ENCODE measurements at regions of chr6 and their contacts with region 1.

Region 1: GRCh38 chr6:137165375-137166246 is 7.8 kb downstream of the IL22RA2 start:
- DNase-seq: peak in 5 of 9 experiments; percentile 15 to 61 (median 30)
- ATAC-seq: peak; percentile 67
- H3K4me3 ChIP-seq: no peak overlapping the region
- H3K4me3 Mint-ChIP-seq: no peak overlapping the region
- H3K27ac ChIP-seq: no peak overlapping the region
- H3K27ac Mint-ChIP-seq: peak overlapping the region; percentile 64
- H3K4me1 ChIP-seq: peaks cover 11% of the 10 kb centered on the region
- H3K4me1 Mint-ChIP-seq: peaks cover 25% of the 10 kb centered on the region
- H3K27me3 ChIP-seq: no peaks in the 10 kb centered on the region
- H3K27me3 Mint-ChIP-seq: peaks cover 4% of the 10 kb centered on the region
- CTCF ChIP-seq: no peak

Region 2: GRCh38 chr6:137094411-137095008 is 71.1 kb before region 1 on chr6:
- CTCF ChIA-PET with region 1: interaction called, 12 read pairs
- POLR2A ChIA-PET with region 1: no interaction called
- intact Hi-C with region 1: loop called in 1 of 2 experiments (anchors 1 kb)
- DNase-seq: peak; percentile 14 to 79 (median 54)
- ATAC-seq: peak; percentile 67
- H3K4me3 ChIP-seq: no peak overlapping the region
- H3K4me3 Mint-ChIP-seq: no peak overlapping the region
- H3K27ac ChIP-seq: no peak overlapping the region
- H3K27ac Mint-ChIP-seq: peak overlapping the region; percentile 37
- H3K4me1 ChIP-seq: no peaks in the 10 kb centered on the region
- H3K4me1 Mint-ChIP-seq: peaks cover 18% of the 10 kb centered on the region
- H3K27me3 ChIP-seq: no peaks in the 10 kb centered on the region
- H3K27me3 Mint-ChIP-seq: peaks cover 3% of the 10 kb centered on the region
- CTCF ChIP-seq: peak; percentile 71

Measured in CD8-positive, alpha-beta T cell (primary cell).